A673 (cell line): ENCODE measurements at regions of chr13 and their contacts with region 1.

Region 1: GRCh38 chr13:106536244-106537034 is 977 bp upstream of the EFNB2 start:
- DNase-seq: peak; percentile 89
- H3K4me3 ChIP-seq: peak overlapping the region; percentile 51
- H3K27ac ChIP-seq: no peak overlapping the region
- H3K4me1 ChIP-seq: peaks cover 4% of the 10 kb centered on the region
- H3K27me3 ChIP-seq: peaks cover 35% of the 10 kb centered on the region
- CTCF ChIP-seq: peak; percentile 94

Region 2: DNA sequence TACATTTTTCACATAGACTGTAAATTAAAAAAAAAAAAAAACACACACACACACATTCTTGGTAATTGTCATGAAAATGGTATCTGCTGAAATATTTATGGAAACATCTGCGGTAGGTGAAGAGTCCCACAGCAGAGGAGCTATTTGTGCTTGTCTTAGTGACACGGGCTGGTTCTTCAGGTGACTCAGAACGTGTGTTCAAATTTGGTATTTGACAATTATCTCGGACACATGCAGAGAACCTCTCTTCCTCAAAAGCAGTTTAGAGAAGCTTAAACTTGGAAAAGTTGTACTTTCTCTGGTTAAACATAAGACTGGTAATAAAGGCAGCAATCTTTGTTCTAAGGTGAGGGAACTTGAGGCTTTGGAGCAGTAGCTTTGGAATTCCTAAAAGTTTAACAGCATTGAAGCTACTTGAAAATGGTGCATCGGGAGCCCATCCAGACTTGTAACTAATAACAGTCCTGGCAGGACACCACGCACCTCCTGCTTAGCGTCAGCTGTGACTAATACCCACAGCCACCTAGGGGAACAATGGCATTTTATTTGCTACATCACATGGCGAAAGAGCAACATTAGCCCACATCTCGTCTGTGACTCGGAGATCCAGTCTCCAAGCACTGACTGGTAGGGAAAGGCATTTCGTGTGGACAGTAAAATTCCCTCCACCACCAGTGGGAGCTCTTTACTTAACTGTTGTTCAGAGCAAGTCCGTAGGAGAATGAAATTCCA is 1965.1 kb before region 1 on chr13:
- CTCF ChIA-PET with region 1: no interaction called
- POLR2A ChIA-PET with region 1: no interaction called
- intact Hi-C with region 1: loop called (anchors 5 kb)
- DNase-seq: peak; percentile 48
- H3K4me3 ChIP-seq: no peak overlapping the region
- H3K27ac ChIP-seq: no peak overlapping the region
- H3K4me1 ChIP-seq: no peaks in the 10 kb centered on the region
- H3K27me3 ChIP-seq: peaks cover 7% of the 10 kb centered on the region
- CTCF ChIP-seq: peak; percentile 58

Region 3: DNA sequence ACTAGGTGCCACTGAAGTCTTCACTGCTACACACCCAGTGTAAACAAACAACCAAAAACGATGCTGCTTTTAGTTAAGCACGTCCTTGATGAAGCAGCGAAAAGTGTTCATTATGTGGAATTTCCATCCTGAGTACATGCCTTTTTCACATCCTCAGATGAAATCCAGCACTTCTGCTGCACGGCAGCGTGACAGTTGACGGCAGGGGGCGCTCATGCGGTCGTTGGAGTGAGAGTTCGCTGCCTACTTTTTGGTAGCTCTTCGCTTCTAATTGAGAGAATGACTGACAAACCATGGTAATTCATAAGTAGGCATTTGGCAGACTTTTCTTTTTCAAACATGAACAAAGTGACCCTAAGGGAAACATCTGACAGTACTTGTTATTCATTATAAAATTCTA is 1125.8 kb before region 1 on chr13:
- CTCF ChIA-PET with region 1: interaction called, 4 read pairs
- POLR2A ChIA-PET with region 1: no interaction called
- intact Hi-C with region 1: loop called (anchors 5 kb)
- DNase-seq: peak; percentile 69
- H3K4me3 ChIP-seq: no peak overlapping the region
- H3K27ac ChIP-seq: no peak overlapping the region
- H3K4me1 ChIP-seq: no peaks in the 10 kb centered on the region
- H3K27me3 ChIP-seq: no peaks in the 10 kb centered on the region
- CTCF ChIP-seq: peak; percentile 94

Region 4: DNA sequence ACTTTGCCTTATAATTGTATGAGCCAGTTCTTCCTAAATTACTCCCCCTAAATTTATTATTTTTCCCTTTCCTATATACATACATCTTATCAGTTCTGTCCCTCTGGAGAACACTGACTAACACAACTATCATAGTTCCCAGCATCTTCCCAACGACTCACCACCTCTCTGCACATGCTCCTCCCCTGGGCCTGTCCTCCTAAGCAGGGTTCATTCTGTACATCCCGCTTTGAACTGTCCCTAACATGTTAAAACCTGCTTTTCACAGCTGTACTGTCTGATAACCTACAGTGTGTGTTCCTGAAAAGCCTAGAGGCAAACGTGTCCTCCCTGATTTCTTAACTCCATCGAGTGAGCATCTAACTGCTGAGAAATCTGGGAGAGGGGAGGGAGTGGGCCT is 142.7 kb before region 1 on chr13:
- CTCF ChIA-PET with region 1: interaction called, 18 read pairs
- POLR2A ChIA-PET with region 1: no interaction called
- intact Hi-C with region 1: no loop called
- DNase-seq: no peak
- H3K4me3 ChIP-seq: no peak overlapping the region
- H3K27ac ChIP-seq: no peak overlapping the region
- H3K4me1 ChIP-seq: no peaks in the 10 kb centered on the region
- H3K27me3 ChIP-seq: no peaks in the 10 kb centered on the region
- CTCF ChIP-seq: no peak

Region 5: DNA sequence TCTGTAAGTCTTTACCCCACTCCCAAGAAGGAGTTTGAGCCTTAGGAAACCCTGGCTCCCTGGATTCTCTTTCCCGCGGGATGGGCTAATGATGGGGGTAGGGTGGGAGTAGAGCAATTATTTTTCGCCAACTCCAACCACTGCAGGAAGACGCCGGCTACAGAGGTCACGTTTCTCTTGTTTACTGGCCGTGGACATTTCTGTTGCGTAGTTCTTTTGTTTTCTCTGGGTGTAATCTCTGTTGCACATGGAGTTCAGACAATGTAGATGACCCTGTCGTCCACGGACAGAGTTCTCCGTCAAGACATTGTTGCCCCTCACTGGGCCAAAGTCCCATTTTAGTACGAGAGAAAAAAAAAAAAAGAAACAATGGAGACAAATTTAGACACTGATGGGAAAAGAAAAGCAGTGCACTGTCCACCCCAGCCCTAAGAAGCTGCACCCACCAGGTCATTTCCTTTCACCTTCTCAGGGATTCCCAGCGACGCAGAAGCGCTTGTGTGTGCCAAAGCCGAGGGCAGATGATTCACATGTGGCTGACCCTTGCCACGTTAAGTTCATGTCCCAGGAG is 165.4 kb after region 1 on chr13:
- CTCF ChIA-PET with region 1: no interaction called
- POLR2A ChIA-PET with region 1: no interaction called
- intact Hi-C with region 1: no loop called
- DNase-seq: no peak
- H3K4me3 ChIP-seq: no peak overlapping the region
- H3K27ac ChIP-seq: no peak overlapping the region
- H3K4me1 ChIP-seq: no peaks in the 10 kb centered on the region
- H3K27me3 ChIP-seq: peaks cover 12% of the 10 kb centered on the region
- CTCF ChIP-seq: no peak

Region 6: DNA sequence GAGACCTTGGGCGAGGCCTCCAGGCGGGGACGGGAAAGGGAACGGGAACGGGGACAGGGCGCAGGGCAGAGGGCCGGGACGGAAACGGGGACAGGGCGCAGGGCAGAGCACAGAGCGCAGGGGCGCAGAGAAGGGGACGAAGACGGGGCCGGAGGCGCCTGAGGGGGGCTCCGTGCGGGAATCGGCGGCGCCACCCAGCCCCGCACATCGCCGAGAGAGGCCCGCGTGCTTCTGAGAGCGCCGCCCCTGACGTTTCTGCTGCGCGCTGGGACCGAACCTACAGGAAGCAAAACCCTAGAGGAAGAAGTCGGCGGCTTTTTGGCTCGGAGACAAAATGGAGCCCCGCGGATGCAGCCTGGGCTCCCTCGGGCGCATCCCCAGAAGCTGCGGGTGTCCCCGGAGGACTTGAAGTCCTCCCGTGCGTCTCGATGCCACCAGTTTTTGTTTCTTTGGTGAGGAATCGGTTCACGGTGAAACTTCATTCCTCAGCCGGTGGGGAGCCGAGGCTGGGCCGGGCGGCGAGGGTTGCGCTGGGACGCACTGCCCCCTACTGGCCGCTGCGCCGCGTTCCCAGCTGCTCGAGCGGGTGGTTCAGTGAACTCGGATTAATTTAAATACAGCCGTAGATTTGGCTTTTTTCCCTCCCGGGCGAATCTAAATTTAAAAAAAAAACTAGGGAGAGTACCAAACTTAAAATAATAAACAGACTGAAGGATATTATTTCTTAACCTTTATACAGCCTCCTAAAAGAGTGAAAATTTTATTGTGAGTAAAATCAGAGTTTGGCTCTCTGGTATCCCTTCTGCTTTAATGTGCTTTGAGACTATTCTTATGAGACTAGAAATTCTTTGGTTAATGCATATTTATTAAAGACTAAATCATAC is 381.5 kb after region 1 on chr13:
- CTCF ChIA-PET with region 1: no interaction called
- POLR2A ChIA-PET with region 1: no interaction called
- intact Hi-C with region 1: loop called (anchors 5 kb)
- DNase-seq: peak; percentile 73
- H3K4me3 ChIP-seq: peak overlapping the region; percentile 56
- H3K27ac ChIP-seq: peak overlapping the region; percentile 29
- H3K4me1 ChIP-seq: peaks cover 13% of the 10 kb centered on the region
- H3K27me3 ChIP-seq: peaks cover 10% of the 10 kb centered on the region
- CTCF ChIP-seq: peak; percentile 99